HepG2 (cell line): ENCODE measurements at regions of chr18 and their contacts with region 1.

Region 1: GRCh38 chr18:50356036-50356945 is 18.6 kb upstream of the SKA1 start:
- DNase-seq: peak; percentile 11
- ATAC-seq: peak; percentile 97
- H3K4me3 ChIP-seq: no peak overlapping the region
- H3K27ac ChIP-seq: no peak overlapping the region
- H3K4me1 ChIP-seq: peaks cover 15% of the 10 kb centered on the region
- H3K27me3 ChIP-seq: peaks cover 2 to 4% of the 10 kb centered on the region in 2 experiments; a peak in 3 of 5 replicates
- CTCF ChIP-seq: peak; percentile 22
- EP300 ChIP-seq: no peak
- POLR2A ChIP-seq: no peak
- RAD21 ChIP-seq: no peak

Region 2: DNA sequence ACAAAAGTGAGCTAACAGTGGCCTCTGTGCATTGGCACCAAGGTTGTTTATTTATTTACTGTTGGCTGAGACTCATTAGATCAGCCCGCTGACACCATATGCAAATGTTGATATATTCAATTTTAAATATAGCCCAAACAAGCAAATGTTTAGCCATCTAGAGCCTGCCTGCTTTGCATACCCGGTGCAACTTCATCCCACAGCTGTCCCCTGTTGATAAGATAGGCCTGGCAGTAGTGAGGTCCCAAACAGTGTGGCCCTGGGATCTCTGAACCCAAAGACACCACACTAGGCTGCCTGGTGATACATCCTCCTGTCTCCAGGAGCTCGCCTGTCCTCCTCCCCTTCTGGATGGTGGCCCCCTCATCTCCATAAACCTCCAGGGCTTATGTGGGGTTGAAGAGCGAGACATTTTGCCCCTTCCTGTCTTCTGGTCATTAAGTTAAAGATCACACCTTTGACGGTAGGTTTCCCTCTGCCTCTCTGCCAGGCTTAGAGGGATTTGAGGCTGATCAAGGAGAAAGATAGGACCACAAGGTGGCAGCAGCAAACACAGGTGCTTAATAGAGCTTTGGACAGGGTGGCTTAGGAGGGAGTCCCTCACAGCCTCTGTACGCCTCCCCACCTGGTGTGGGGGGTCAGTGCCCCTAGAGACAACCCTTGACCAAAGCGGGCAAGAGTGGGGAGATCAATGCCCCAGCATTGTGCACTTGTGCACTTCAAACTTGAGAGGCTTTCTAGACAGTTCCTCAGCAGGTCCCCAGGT is 137.7 kb before region 1 on chr18:
- CTCF ChIA-PET with region 1: interaction called, 32 read pairs
- POLR2A ChIA-PET with region 1: no interaction called
- in situ Hi-C with region 1: loop called (anchors 10 kb)
- intact Hi-C with region 1: loop called (anchors 1 kb)
- DNase-seq: peak; percentile 45
- ATAC-seq: peak; percentile 88
- H3K4me3 ChIP-seq: no peak overlapping the region
- H3K27ac ChIP-seq: no peak overlapping the region
- H3K4me1 ChIP-seq: no peaks in the 10 kb centered on the region
- H3K27me3 ChIP-seq: no peaks in the 10 kb centered on the region
- CTCF ChIP-seq: peak; percentile 70
- EP300 ChIP-seq: no peak
- POLR2A ChIP-seq: no peak
- RAD21 ChIP-seq: peak; percentile 28

Region 3: GRCh38 chr18:50287441-50288347 is 68.6 kb before region 1 on chr18 and contains the start of gene CXXC1:
- CTCF ChIA-PET with region 1: interaction called, 7 read pairs
- POLR2A ChIA-PET with region 1: no interaction called
- in situ Hi-C with region 1: no loop called
- intact Hi-C with region 1: loop called (anchors 5 kb)
- DNase-seq: peak; percentile 98
- ATAC-seq: peak; percentile 96
- H3K4me3 ChIP-seq: peak within 1 kb of the TSS; percentile 88 to 93 (median 90)
- H3K27ac ChIP-seq: peak within 1 kb of the TSS; percentile 59
- H3K4me1 ChIP-seq: peaks cover 16% of the 10 kb centered on the region
- H3K27me3 ChIP-seq: peaks cover 0 to 4% of the 10 kb centered on the region in 2 experiments; a peak in 2 of 5 replicates
- CTCF ChIP-seq: peak; percentile 78
- EP300 ChIP-seq: no peak; a peak in 1 of 4 replicates
- POLR2A ChIP-seq: peak in 1 of 2 experiments; percentile 41; a peak in 2 of 4 replicates
- RAD21 ChIP-seq: peak; percentile 29; the same call in 1 of the 2 replicates
- total RNA-seq, gene CXXC1: 29.8 and 32.9 TPM in 2 replicates

Region 4: DNA sequence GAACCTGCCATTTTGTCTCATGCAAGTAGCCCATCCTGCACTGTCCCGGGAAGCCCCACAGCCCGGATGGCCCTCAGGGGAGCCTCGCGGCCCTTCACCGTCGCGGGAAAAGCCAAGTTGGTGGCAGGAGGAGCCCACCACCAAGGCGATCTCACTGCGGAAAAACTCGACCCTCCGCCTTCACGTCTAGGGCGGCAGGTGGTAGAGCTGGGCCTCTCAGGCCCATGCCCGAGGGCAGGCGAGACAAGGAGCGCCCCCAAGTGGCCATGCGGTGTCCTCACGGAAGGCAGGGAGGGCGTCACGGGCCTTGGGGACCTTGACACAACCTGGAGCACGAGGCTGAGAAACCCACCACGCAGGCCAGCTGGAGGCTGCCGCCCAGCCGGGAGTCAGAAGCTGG is 16.2 kb before region 1 on chr18:
- CTCF ChIA-PET with region 1: no interaction called
- POLR2A ChIA-PET with region 1: no interaction called
- in situ Hi-C with region 1: no loop called
- intact Hi-C with region 1: no loop called
- DNase-seq: no peak
- ATAC-seq: 0 out of 3 replicates have a peak, but pooled peaks have one; percentile 31
- H3K4me3 ChIP-seq: no peak overlapping the region
- H3K27ac ChIP-seq: no peak overlapping the region
- H3K4me1 ChIP-seq: no peaks in the 10 kb centered on the region
- H3K27me3 ChIP-seq: no peaks in the 10 kb centered on the region
- CTCF ChIP-seq: peak; percentile 41
- EP300 ChIP-seq: no peak
- POLR2A ChIP-seq: no peak
- RAD21 ChIP-seq: no peak